BJ (cell line): ENCODE measurements at regions of chr12 and their contacts with region 1.

Region 1: DNA sequence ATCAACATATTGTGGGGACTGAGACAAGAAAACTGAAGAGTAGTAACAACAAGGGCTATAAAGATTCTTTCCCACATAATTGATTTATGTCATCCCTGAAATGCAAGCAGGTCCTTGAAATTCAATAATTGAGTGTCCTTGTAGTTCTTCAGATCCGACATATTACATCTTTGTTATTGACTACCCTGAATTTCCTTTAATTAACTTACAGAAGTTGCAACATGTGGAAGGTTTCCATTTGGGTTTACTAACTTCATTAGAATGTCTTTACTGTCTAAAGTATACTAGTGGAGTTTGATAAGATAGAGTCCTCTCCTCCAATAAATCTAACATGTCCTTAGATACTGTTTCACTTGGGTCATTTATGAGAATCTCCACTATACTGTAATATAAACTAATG is 951.8 kb downstream of the SLC6A15 start:
- DNase-seq: no peak
- H3K4me3 ChIP-seq: no peak overlapping the region
- H3K27me3 ChIP-seq: no peaks in the 10 kb centered on the region
- CTCF ChIP-seq: no peak

Region 2: GRCh38 chr12:82896979-82897378 is 1063.8 kb before region 1 on chr12:
- CTCF ChIA-PET with region 1: no interaction called
- POLR2A ChIA-PET with region 1: interaction called, 11 read pairs
- DNase-seq: no peak
- H3K4me3 ChIP-seq: no peak overlapping the region
- H3K27me3 ChIP-seq: no peaks in the 10 kb centered on the region
- CTCF ChIP-seq: no peak

Region 3: DNA sequence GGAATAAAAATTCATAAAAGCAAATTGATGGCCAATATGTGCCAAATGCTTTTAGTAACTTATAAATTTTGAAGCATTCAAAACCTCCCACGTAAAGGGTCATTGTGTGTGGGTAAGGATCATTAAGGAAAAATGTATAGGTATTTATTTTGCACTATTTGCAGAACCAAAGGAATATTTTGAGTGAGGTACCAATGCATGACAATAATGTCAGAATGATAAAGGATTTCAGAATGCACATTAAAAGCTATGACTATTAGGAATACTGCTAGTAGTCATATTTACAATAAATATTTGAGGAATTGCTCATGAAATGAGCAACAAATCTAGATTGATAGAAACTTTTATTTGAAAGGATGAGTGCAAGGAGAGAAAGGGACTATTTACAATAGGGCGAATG is 19.0 kb after region 1 on chr12:
- CTCF ChIA-PET with region 1: no interaction called
- POLR2A ChIA-PET with region 1: no interaction called
- DNase-seq: no peak
- H3K4me3 ChIP-seq: no peak overlapping the region
- H3K27me3 ChIP-seq: no peaks in the 10 kb centered on the region
- CTCF ChIP-seq: no peak

Region 4: GRCh38 chr12:84113666-84114065 is 152.9 kb after region 1 on chr12:
- CTCF ChIA-PET with region 1: no interaction called
- POLR2A ChIA-PET with region 1: no interaction called
- DNase-seq: no peak
- H3K4me3 ChIP-seq: no peak overlapping the region
- H3K27me3 ChIP-seq: no peaks in the 10 kb centered on the region
- CTCF ChIP-seq: no peak